ENCODE measurements at regions of chr12 and their contacts with region 1.

Region 1: GRCh38 chr12:34119366-34119765 is 97.1 kb downstream of the ALG10 start:
- DNase-seq: no peak
- H3K4me3 ChIP-seq: no peak overlapping the region
- H3K27ac ChIP-seq: no peak overlapping the region
- H3K4me1 ChIP-seq: no peaks in the 10 kb centered on the region
- H3K27me3 ChIP-seq: no peaks in the 10 kb centered on the region
- CTCF ChIP-seq: no peak

Region 2: DNA sequence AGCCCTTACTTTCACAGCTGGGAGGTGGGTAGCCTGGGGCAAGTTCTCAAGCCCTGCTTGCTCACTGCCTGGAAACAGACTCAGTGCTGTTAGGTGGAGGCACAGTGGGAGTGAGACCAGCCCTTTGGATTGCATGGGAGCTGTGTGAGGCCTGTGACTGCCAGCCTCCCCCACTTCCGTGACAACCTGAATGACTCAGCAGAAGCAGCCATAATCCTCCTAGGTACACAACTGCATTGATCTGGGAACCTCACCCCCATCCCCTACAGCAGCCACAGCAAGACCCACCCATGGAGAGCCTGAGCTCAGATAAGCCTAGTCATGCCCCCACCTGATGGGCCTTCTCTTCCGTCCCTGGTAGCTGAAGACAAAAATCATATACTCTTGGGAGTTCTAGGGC is 70.7 kb before region 1 on chr12:
- CTCF ChIA-PET with region 1: no interaction called
- POLR2A ChIA-PET with region 1: no interaction called
- intact Hi-C with region 1: loop called (anchors 2 kb)
- DNase-seq: no peak
- H3K4me3 ChIP-seq: no peak overlapping the region
- H3K27ac ChIP-seq: no peak overlapping the region
- H3K4me1 ChIP-seq: no peaks in the 10 kb centered on the region
- H3K27me3 ChIP-seq: no peaks in the 10 kb centered on the region
- CTCF ChIP-seq: no peak

Region 3: GRCh38 chr12:34107781-34108404 is 11.5 kb before region 1 on chr12:
- CTCF ChIA-PET with region 1: no interaction called
- POLR2A ChIA-PET with region 1: no interaction called
- intact Hi-C with region 1: no loop called
- DNase-seq: no peak
- H3K4me3 ChIP-seq: no peak overlapping the region
- H3K27ac ChIP-seq: no peak overlapping the region
- H3K4me1 ChIP-seq: no peaks in the 10 kb centered on the region
- H3K27me3 ChIP-seq: no peaks in the 10 kb centered on the region
- CTCF ChIP-seq: no peak